Cardiac septum (tissue), 1 donor: ENCODE measurements at regions of chr1 and their contacts with region 1.

Region 1: GRCh38 chr1:12596007-12596821 is 21.8 kb downstream of the DHRS3 start:
- DNase-seq: peak; percentile 92

Region 2: DNA sequence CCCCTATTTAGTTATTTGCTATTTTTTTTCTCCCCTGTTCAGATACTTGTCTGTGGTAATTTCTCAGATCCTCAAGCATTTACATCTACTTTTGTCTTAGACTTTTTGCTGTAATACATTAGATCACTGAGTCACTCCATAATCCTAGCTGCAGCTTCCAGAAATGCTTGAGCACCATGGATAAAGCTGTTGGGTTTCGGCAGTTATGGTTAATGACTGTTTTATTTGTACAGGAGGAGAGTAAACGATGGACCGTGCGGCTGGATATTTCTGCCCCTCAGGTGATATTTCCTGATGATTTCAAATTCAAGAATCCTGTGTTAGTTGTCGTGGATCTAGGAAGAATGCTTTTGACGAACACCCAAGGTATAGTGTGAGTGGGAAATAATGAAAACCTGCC is 323.4 kb before region 1 on chr1:
- intact Hi-C with region 1: no loop called
- DNase-seq: no peak

Region 3: DNA sequence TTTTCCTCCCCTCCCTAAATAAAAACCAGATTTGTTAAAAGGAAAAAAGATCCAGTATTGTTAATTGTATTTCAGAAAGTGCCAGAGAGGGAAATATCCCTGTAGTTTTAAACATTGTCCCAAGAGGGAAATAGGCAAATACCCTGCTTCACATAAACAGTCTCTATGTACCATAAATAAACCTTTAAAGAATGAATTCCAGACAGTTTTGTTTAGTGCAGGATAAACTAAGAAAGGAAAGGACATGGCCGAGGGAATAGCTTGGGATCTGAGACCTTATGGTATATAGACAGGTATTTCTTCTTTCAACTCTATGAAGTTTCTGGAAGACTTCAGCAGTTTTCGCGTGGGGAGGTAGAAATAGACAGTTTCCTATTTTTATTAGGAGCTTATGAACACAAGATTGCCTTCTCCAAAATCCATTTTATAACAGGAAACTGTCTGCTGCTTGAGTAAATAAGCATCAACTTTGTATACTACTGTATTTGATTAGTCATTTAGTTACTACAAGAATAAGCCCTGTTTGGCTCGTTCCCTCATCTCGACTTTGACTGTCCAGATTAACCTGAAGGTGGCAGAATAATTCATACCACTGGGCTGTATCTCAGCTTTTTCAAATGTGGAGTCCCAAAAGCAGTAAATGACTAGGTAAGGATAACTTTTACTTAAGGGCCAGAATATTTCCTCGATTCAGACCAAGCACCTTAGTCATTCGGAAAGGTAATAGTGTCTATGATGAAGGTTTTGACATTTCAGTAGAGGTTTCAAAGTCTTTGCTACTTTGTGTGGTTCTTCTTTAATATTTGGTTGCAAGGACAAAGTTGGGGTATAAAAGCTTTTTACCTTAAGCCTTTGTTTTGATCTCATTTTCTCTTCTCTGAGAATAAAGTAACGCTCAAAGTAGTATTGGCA is 188.9 kb before region 1 on chr1:
- intact Hi-C with region 1: loop called (anchors 2 kb)
- DNase-seq: no peak

Region 4: DNA sequence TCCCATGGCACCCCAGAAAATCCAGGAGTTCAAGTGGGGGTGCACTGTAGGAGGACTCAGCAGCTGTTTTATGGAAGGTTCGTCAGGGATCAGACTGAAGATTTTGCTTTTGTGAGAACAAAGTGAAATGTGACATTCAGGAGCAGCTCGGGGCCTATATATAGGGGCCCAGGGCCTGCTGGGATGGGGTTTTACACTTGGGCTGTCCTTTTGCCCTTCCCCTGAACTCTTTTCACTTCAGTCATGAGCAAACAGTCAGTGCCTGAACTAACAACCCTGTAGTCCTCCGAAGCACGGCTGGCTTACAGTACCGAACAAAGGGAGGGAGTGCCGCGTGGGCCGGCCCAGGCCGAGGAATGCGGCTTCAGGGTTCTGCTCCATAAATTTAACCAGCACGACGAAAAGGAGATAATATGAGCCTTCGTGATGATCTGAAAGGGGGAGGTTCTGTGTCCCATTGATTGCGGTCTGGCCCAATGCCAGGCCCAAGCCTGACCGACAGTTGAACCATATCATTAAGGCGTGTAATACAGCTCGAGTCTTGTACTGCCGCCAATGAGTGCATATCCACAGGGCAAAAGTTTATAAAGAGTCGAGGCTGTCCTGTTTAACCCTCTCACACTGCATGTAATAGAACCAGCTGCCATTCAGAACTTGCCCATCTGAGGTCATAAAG is 118.1 kb before region 1 on chr1:
- intact Hi-C with region 1: loop called (anchors 5 kb)
- DNase-seq: peak; percentile 86

Region 5: GRCh38 chr1:12549460-12550349 is 46.5 kb before region 1 on chr1:
- intact Hi-C with region 1: loop called (anchors 2 kb)
- DNase-seq: no peak